ENCODE measurements at regions of chr11 and their contacts with region 1.

Region 1: GRCh38 chr11:67239783-67240575 is 26.3 kb upstream of the GRK2 start:
- DNase-seq: peak; percentile 82 to 99 (median 97)
- H3K4me3 ChIP-seq: peak overlapping the region; percentile 53 to 99 (median 75)
- H3K27ac ChIP-seq: peak overlapping the region; percentile 29 to 99 (median 91)
- H3K27me3 ChIP-seq: no peaks in the 10 kb centered on the region
- CTCF ChIP-seq: peak in 51 of 56 donors; percentile 1 to 64 (median 42)

Region 2: DNA sequence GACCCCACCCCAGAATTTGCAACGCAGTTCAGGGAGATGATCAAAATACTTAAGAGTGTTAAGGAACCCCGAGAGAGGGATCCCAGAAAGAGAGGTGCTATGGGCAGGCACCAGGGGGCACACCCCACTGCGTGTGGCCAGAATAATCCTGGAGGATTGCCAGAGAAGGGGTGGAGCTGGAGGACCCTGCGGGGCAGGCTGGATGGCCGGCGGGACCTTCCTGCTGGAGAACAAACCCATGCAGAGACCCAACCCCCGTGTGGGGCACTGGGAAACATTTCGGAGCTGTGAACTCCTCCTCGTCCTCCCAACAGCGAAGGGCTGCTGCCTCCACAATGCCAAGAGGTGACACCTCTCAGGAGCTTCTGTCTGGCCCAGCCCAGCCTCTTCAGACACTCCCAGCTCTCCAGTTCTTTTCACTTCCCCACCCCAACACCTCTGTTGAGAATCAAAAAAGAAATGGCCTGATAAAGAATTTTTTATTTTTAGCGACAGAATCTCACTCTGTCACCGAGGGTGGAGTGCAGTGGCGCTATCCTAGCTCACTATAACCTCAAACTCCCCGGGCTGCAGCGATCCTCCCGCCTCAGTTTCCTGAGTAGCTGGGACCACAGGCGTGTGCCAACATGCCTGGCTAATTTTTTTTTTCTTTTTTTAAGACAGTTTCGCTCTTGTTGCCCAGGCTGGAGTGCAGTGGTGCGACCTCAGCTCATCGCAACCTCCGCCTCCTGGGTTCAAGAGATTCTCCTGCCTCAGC is 157.8 kb before region 1 on chr11:
- intact Hi-C with region 1: loop called in 1 of 2 experiments (anchors 10 kb)
- DNase-seq: no peak
- H3K4me3 ChIP-seq: peak overlapping the region in 19 of 59 donors; percentile 1 to 42 (median 12)
- H3K27ac ChIP-seq: no peak overlapping the region
- H3K27me3 ChIP-seq: peaks cover 0 to 2% (median 0%) of the 10 kb centered on the region in 45 donors
- CTCF ChIP-seq: no peak

Region 3: DNA sequence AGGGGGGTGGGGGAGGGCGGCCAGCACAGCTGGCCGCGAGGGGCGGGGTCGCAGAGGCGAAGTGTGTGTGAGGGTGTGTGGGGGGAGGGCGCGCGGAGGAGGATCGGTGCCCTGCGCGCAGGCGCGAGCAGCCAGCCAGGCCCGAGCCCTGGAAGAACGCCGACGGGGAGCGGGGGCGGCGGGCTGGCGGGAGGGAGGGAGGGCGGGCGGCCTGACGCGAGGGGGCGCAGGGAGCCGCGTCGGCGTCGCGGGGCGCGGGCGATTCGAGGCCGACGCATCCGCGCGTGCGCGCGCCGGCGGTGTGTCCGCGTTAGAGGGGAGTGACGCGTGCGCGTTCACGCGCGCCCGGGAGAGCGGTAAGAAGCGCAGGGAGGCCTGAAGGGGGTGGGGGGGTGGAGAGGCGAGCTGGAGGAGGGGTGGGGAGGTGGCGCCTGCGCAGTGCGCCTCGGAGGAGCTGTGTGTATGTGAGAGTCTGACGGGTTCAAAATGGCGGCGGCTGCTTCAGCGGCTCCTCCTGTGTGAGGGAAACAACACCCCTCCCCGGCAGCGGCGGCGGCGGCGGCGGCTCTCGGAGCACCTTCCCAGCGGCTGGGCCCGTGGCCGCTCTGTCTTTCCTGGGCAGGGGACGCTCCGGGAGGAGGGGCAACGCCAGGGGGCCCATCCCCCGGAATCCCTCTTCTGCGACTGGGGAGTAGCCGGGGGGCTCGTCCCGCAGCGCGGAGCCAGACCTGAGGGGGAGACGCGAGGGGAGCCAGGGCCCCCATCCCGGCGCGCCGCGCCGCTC is 121.0 kb before region 1 on chr11 and contains the start of gene KDM2A:
- intact Hi-C with region 1: loop called (anchors 2 to 5 kb)
- DNase-seq: peak; percentile 94 to 99 (median 98)
- H3K4me3 ChIP-seq: peak within 1 kb of the TSS; percentile 68 to 97 (median 90)
- H3K27ac ChIP-seq: peak within 1 kb of the TSS; percentile 90 to 100 (median 98)
- H3K27me3 ChIP-seq: no peaks in the 10 kb centered on the region
- CTCF ChIP-seq: peak in 47 of 56 donors; percentile 9 to 74 (median 45)
- total RNA-seq, gene KDM2A: 56.5 to 97.4 (median 71.9) TPM

Region 4: DNA sequence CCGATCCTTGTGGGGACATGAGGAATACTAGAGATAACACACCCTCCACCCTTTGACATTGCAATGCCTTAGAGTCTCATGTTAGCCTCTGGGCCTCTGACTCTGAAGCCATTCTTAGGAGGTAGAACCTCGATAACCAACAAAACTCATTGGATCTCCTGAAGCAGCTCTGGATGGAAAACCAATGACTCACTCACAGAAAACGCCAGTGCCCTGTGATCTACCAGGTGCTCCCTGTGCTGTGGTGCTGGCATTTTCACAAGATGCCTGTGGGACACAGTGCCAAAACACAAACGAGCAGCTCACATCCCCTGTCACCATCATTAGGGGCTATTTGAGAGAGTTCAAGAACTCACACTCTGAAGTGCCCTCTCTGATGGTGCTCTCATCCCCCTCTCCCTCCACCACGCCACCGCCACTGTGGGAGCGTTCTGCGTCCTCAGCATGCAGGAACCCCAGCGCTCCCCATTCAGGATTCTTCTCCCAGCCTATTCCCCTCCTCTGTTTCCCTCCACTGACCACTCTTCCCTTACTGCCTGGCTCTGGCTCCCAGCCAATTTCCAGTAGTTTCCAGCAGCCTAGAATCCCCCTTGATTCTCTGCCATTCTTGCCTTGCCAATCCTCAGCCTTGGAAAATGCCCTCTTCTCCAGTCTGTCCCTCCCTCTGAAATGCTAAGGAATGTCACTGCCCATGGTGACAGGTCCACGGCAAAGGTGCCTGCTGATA is 118.0 kb after region 1 on chr11:
- intact Hi-C with region 1: no loop called
- DNase-seq: no peak
- H3K4me3 ChIP-seq: no peak overlapping the region
- H3K27ac ChIP-seq: no peak overlapping the region
- H3K27me3 ChIP-seq: no peaks in the 10 kb centered on the region
- CTCF ChIP-seq: no peak

Measured in dorsolateral prefrontal cortex (tissue), 120 donors.